ENCODE measurements at regions of chr1 and their contacts with region 1.

Region 1: DNA sequence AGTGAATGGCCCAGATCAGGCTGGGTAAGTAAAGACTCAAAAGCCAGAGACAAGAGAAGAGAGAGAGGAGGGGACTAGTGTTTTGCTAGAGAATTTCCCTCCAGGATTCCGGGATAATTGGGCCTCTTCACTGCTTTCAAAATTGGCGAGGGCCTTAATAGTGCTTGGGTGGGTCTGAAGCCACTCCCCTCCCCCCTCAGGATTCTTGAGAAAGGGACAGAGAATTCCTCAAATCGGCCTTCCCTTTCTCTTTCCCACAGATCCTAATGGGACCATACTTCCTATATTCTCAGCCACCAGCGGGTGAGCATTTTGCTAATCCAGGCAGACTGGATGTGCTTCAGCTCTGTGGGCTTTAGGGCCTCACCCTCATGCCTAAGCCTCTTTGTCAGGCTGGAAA is 11.9 kb downstream of the SFN start:
- DNase-seq: no peak
- H3K4me3 ChIP-seq: no peak overlapping the region
- H3K27ac ChIP-seq: no peak overlapping the region
- H3K27me3 ChIP-seq: no peaks in the 10 kb centered on the region
- CTCF ChIP-seq: no peak

Region 2: GRCh38 chr1:26723013-26723991 is 151.6 kb before region 1 on chr1:
- intact Hi-C with region 1: no loop called
- DNase-seq: peak; percentile 58 to 96 (median 77)
- H3K4me3 ChIP-seq: peak overlapping the region in 41 of 59 donors; percentile 1 to 48 (median 17)
- H3K27ac ChIP-seq: peak overlapping the region in 50 of 59 donors; percentile 0 to 77 (median 45)
- H3K27me3 ChIP-seq: no peaks in the 10 kb centered on the region
- CTCF ChIP-seq: peak in 8 of 56 donors; percentile 6 to 21 (median 8)

Region 3: DNA sequence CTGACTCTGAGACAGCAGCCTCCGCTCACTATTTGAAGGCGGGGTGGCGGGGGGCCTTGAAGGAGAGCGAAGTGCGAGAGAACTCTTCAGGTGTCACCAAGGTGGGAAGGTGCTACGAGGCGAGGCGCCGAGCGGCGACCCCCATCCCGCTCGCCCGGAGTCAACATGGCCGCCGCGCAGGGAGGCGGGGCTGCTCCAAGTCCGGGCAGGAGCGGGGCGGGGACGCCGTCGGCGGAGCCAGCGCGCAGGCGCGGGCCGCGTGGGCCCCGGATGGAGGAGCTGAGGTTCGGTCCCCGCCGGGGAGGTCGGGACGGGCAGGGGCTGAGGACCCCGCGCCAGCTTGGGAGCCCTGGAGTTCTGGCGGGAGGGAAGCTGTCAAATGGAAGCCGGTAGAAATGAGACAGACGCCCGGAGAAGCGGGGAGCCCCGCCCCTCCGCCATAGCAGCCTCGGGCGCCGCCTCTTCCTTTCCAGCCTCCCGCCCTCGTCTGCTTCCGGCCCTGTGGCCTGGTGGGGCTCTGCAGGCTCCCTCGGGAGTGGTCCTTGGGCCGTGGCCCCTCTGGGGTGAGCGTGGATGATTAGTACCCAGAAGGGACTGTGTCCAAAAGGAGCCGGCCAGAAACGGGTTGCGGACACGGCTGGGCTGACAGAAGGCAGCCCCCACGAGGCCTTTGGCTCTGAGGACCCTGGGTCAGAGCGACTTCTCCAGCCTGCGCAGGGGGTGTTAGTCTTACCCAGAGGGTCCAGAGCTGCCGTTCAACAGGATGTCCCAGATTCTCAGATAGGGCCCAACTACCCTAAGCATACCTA is 87.0 kb before region 1 on chr1 and contains the start of gene PIGV:
- intact Hi-C with region 1: loop called in 1 of 2 experiments (anchors 5 kb)
- DNase-seq: peak; percentile 75 to 90 (median 84)
- H3K4me3 ChIP-seq: peak within 1 kb of the TSS; percentile 65 to 98 (median 87)
- H3K27ac ChIP-seq: peak within 1 kb of the TSS; percentile 95 to 100 (median 100)
- H3K27me3 ChIP-seq: no peaks in the 10 kb centered on the region
- CTCF ChIP-seq: peak in 50 of 56 donors; percentile 10 to 63 (median 44)
- total RNA-seq, gene PIGV: 9.1 to 22.9 (median 14.3) TPM

Region 4: DNA sequence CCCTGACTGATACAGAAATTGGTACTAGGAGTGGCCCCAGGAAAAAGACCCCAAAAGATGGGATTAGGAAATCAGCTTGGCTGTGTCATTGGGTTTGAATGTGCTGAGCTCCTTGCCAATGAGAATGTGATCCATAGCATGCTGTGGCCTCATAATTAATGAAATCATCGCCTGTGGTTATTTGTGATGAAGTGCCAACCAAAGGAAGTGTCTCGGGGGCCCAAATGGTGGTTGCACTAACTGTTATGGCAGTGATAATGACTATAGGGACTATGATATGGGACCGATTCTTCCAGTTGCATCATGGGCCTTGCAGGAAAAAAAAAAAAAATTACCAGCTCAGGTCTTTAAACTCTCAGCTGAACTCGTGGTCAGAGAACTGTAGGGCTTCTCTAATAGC is 63.8 kb before region 1 on chr1:
- intact Hi-C with region 1: loop called in 1 of 2 experiments (anchors 5 kb)
- DNase-seq: no peak
- H3K4me3 ChIP-seq: no peak overlapping the region
- H3K27ac ChIP-seq: no peak overlapping the region
- H3K27me3 ChIP-seq: no peaks in the 10 kb centered on the region
- CTCF ChIP-seq: no peak

Region 5: GRCh38 chr1:26853156-26853555 is 21.7 kb before region 1 on chr1:
- intact Hi-C with region 1: loop called in 1 of 2 experiments (anchors 2 kb)
- DNase-seq: peak; percentile 55 to 87 (median 72)
- H3K4me3 ChIP-seq: no peak overlapping the region
- H3K27ac ChIP-seq: peak overlapping the region in 3 of 59 donors; percentile 10 to 20 (median 11)
- H3K27me3 ChIP-seq: no peaks in the 10 kb centered on the region
- CTCF ChIP-seq: peak; percentile 25 to 84 (median 72)

Region 6: DNA sequence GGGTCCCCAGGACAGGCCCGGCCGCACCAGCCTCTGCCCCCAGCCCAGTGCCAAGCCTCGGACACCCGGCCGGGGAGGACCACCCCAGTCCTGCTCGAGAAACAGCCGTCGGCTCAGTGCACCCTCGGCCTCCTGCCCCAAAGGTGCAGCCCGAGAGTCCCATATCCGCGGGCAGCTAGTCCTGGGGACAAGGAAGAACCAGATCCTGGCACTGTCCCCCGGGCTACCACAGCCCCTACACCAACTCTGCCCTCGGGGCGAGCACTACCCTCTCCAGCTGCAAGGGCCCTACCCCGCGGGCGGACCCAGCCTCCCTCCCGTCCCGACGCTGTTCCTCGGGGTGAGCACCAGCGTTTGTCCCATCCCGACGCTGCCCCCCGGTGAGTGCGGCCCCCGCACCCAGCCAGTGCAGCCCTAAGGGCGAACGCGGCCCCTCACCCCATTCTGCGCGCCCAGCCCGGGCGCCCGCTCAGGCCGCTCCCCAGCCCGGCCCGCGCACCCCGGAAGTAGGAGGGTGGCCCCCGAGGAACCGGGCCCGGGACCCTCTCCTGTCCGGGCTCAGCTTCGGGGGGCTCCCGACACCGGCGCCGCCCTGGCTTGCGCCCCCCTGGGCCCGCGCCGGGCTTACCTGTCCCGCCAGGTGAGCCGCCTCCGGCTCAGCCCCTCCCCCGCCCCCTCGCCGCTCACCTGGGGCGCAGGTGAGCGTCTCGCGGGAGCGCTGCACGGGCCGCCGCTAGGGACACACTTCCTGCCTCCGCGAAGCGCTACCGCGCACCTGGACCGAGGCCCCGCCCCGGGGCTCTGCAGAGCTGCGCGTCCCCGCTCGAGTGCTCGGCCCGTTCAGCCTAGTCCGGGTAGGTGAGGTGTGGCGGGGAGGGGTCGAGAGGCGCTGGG is 85.1 kb after region 1 on chr1 and contains the start of gene KDF1:
- intact Hi-C with region 1: no loop called
- DNase-seq: peak in 1 of 10 donors; percentile 58
- H3K4me3 ChIP-seq: peak within 1 kb of the TSS in 57 of 59 donors; percentile 6 to 62 (median 46)
- H3K27ac ChIP-seq: peak within 1 kb of the TSS in 26 of 59 donors; percentile 1 to 73 (median 36)
- H3K27me3 ChIP-seq: peaks cover 0 to 56% (median 29%) of the 10 kb centered on the region in 45 donors
- CTCF ChIP-seq: no peak
- total RNA-seq, gene KDF1: 0.27 to 3.7 (median 1.1) TPM in 113 of 120 experiments, not detected in the others

Measured in dorsolateral prefrontal cortex (tissue), 120 donors.